ENCODE measurements at regions of chr11 and their contacts with region 1.

Region 1: DNA sequence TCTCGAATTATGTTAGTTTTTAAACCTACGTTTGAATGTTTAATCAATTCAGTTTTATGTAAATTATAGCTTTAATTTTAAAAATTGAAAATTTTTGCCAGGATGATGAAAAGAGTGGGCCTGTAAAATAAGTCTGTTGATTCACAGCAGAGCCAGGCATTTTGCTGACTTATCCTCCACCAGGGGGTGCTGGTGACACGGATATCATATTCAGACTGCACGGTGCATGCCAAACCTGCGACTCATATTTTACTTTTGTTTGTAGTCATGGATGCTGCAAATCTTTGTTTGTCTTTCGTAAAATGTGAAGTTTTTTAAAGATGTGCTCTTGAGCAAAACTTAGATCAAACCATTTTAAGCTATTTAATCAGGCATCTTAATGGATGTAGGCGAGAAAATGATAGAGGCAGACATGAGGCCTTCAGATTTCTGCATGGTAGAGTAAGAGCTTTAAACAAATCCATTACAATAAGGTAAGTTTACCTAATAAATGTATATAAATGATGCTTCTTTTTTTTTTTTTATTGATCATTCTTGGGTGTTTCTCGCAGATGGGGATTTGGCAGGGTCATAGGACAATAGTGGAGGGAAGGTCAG is 3.6 kb upstream of the OR8B3 start:
- DNase-seq: peak; percentile 47
- H3K4me3 ChIP-seq: no peak overlapping the region
- H3K27ac ChIP-seq: no peak overlapping the region
- H3K4me1 ChIP-seq: no peaks in the 10 kb centered on the region
- H3K27me3 ChIP-seq: no peaks in the 10 kb centered on the region
- CTCF ChIP-seq: peak; percentile 29 to 66 (median 58)
- EP300 ChIP-seq: no peak
- POLR2A ChIP-seq: no peak

Region 2: DNA sequence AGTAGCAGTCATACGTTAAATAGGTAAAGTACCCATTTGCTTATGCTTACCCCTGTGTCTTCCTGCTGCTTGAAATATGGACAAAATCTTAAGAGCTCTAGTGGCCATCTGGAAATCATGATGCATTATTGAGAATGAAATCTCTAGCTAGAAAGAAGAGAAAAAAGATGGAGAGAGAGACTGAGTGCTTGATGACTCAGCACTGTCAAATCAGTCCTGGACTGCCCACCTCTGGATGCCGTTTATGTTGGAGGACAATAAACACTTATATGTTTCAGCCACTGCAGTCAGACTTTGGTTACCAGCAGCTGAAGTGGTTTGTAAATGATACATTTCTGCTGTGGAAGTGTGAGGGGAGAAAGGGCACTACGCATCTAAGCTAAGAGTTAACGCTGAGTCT is 18.6 kb after region 1 on chr11:
- in situ Hi-C with region 1: no loop called
- intact Hi-C with region 1: loop called (anchors 1 kb)
- DNase-seq: no peak
- H3K4me3 ChIP-seq: no peak overlapping the region
- H3K27ac ChIP-seq: no peak overlapping the region
- H3K4me1 ChIP-seq: no peaks in the 10 kb centered on the region
- H3K27me3 ChIP-seq: peaks cover 5% of the 10 kb centered on the region
- CTCF ChIP-seq: no peak
- EP300 ChIP-seq: no peak
- POLR2A ChIP-seq: no peak

Region 3: GRCh38 chr11:124434699-124435098 is 32.3 kb after region 1 on chr11:
- in situ Hi-C with region 1: no loop called
- intact Hi-C with region 1: no loop called
- DNase-seq: no peak
- H3K4me3 ChIP-seq: no peak overlapping the region
- H3K27ac ChIP-seq: no peak overlapping the region
- H3K4me1 ChIP-seq: no peaks in the 10 kb centered on the region
- H3K27me3 ChIP-seq: no peaks in the 10 kb centered on the region
- CTCF ChIP-seq: no peak
- EP300 ChIP-seq: no peak
- POLR2A ChIP-seq: no peak

Region 4: DNA sequence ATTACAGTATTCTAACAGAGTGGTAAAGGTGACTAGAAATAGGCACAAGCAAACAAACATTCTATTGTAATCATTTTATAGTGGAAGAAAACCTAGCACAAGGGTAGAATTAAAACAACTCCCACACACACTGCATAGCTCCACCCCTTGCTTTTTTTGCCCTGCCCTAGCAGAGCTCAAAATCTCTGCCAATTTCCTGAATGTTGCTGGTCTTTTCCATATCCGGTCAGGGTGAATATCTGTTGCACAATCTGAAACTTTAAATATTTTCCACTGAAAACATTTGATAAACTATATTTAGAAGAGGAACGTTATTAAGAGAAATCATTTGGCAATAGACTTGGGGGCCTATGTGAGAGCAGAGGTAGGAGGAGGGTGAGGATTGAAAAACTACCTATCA is 274.0 kb after region 1 on chr11:
- in situ Hi-C with region 1: no loop called
- intact Hi-C with region 1: no loop called
- DNase-seq: peak; percentile 52
- H3K4me3 ChIP-seq: no peak overlapping the region
- H3K27ac ChIP-seq: peak overlapping the region; percentile 59 to 72 (median 61)
- H3K4me1 ChIP-seq: peaks cover 8 to 44% (median 14%) of the 10 kb centered on the region in 4 donors
- H3K27me3 ChIP-seq: no peaks in the 10 kb centered on the region
- CTCF ChIP-seq: no peak
- EP300 ChIP-seq: no peak
- POLR2A ChIP-seq: no peak

Region 5: DNA sequence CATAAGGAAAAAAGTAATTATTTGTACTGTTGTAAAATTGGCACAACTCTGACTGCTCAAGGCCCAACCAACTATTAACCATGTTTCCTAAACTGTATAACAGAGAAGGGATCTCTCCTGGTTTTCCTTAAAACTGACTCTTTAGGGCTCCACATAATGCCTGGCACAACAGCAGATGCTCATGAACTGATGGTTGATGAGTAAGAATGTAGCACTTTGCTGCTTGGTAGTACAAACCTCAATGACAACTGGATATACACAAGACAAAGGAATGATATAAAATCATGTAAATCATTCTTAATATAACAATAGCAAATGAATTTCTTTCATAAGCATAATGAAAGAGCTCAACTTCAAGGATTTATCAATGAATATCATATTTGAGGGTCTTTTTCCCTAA is 386.1 kb after region 1 on chr11:
- in situ Hi-C with region 1: no loop called
- intact Hi-C with region 1: no loop called
- DNase-seq: no peak
- H3K4me3 ChIP-seq: no peak overlapping the region
- H3K27ac ChIP-seq: no peak overlapping the region
- H3K4me1 ChIP-seq: peaks cover 0 to 9% (median under 1%) of the 10 kb centered on the region in 4 donors
- H3K27me3 ChIP-seq: no peaks in the 10 kb centered on the region
- CTCF ChIP-seq: no peak
- EP300 ChIP-seq: no peak
- POLR2A ChIP-seq: no peak

Region 6: GRCh38 chr11:124837491-124837856 is 435.1 kb after region 1 on chr11:
- in situ Hi-C with region 1: loop called in 1 of 4 experiments (anchors 25 kb)
- intact Hi-C with region 1: no loop called
- DNase-seq: no peak
- H3K4me3 ChIP-seq: no peak overlapping the region
- H3K27ac ChIP-seq: peak overlapping the region in 1 of 4 donors; percentile 67
- H3K4me1 ChIP-seq: peaks cover 11 to 39% (median 16%) of the 10 kb centered on the region in 4 donors
- H3K27me3 ChIP-seq: peaks cover 53% of the 10 kb centered on the region
- CTCF ChIP-seq: no peak
- EP300 ChIP-seq: no peak
- POLR2A ChIP-seq: no peak

Region 7: DNA sequence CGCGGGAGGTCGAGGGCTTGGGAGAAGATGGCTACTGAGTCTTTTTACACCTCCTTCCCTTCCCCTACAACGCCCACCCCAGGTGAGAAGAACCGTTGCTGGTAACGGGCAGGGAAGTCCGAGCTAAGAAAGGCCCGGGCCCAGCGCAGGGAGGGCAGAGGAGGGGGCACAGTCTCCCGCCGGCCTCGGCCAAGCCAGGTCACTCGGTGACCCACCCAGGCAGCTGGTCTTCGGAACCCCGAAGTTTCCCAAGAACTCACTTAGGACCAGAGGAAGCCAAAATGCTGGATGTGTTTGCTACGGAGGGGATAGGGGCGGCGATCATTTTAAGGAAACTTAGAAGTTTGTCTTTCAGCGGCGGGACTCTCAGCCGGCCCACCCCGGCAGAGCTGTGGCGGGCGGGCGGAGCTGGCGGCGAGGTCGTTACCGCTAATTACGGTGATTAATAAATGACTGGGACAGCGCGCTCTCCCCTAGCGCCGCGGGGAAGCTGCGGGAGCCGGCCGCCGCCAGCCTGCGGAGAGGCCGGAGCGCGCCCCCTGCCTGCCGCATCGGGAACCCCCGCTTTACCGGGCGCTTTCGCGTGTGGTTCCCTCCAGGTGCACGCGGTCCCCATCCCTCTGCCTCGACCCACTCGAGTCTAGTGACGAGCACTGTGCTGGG is 463.6 kb after region 1 on chr11:
- in situ Hi-C with region 1: loop called in 1 of 4 experiments (anchors 25 kb)
- intact Hi-C with region 1: no loop called
- DNase-seq: peak; percentile 31
- H3K4me3 ChIP-seq: peak overlapping the region in 2 of 4 donors; percentile 9 to 42
- H3K27ac ChIP-seq: no peak overlapping the region
- H3K4me1 ChIP-seq: peaks cover 12 to 49% (median 22%) of the 10 kb centered on the region in 4 donors
- H3K27me3 ChIP-seq: peaks cover 100% of the 10 kb centered on the region
- CTCF ChIP-seq: peak; percentile 51 to 78 (median 77)
- EP300 ChIP-seq: no peak
- POLR2A ChIP-seq: no peak

Measured in transverse colon (tissue), 4 donors.